Dorsolateral prefrontal cortex (tissue), 120 donors: ENCODE measurements at regions of chr10 and their contacts with region 1.

Region 1: DNA sequence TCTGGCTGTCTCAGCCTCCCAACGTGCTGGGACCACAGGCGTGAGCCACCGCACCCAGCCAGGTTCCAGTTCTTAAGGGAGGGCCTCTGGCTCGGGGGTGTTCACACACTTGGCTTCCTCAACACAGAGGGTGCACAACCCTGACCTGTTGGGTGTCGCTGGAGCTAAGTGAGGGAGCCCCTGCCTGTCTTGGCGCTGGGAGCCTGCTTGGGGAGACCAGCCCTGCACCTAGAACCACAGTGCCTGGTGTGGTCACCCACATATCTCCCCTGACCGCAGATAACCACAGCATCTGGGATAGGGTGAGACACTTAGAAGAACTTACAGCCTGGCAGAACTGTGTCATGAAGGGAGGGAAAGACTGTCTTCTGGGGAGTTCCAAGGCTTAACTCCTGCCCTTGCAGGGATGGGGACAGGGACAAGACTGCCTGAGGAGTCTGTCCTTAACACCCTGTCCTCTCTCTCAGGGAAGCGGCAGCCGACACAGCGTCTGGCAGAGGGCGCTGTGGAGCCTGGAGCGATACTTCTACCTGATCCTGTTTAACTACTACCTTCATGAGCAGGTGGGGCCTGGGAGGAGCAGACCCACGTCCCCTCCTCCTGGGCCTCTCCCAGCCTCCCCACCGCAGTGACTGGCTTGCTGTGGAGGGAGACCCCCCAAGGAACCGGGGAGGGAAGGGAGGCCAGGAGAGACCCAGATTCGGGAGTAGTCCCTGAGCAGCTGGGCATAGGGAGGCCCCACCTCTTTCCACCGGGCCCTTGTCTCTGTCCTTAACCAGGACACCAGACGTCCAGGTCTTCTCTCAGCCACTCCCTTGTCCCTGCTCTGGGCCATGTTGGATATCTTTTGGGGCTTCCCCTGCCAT is 59.0 kb downstream of the PALD1 start:
- DNase-seq: no peak
- H3K4me3 ChIP-seq: no peak overlapping the region
- H3K27ac ChIP-seq: peak overlapping the region in 6 of 59 donors; percentile 9 to 55 (median 21)
- H3K27me3 ChIP-seq: no peaks in the 10 kb centered on the region
- CTCF ChIP-seq: peak in 24 of 56 donors; percentile 6 to 38 (median 18)

Region 2: DNA sequence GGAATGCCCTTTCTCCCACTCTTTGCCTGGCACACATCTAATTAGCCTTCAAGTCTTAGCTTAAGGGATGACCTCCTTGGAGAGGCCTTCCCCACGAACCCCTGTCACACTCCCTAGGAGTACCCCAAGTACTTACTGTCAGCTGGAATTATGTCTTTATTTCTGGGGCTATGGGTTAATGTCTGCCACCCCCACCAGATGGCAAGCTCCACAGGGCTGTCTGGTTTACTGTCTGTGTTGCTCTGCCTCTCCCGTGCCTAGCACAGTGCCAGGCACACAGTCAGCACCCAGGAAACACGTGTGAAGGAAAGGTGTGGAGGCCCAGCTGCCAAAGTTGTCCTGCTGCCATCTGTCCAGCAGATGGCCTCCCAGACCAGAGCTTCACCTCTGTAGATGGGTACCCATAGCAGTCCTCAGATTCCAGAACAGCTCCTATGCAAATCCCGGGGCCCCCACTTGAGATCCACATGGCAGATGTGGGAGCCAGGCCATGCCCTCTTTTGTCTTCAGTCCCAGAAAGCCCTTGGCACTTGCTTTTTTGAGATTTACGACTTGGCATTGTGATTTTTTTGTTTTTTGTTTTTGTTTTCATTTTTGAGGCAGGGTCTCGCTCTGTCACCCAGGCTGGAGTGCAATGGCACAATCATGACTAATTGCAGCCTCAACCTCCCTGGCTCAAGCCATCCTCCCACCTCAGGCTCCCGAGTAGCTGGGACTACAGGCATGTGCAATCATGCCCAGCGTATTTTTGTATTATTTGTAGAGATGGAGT is 76.2 kb before region 1 on chr10:
- intact Hi-C with region 1: loop called (anchors 2 to 5 kb)
- DNase-seq: peak in 7 of 10 donors; percentile 48 to 69 (median 60)
- H3K4me3 ChIP-seq: no peak overlapping the region
- H3K27ac ChIP-seq: peak overlapping the region in 19 of 59 donors; percentile 2 to 63 (median 28)
- H3K27me3 ChIP-seq: no peaks in the 10 kb centered on the region
- CTCF ChIP-seq: peak; percentile 52 to 89 (median 80)

Region 3: DNA sequence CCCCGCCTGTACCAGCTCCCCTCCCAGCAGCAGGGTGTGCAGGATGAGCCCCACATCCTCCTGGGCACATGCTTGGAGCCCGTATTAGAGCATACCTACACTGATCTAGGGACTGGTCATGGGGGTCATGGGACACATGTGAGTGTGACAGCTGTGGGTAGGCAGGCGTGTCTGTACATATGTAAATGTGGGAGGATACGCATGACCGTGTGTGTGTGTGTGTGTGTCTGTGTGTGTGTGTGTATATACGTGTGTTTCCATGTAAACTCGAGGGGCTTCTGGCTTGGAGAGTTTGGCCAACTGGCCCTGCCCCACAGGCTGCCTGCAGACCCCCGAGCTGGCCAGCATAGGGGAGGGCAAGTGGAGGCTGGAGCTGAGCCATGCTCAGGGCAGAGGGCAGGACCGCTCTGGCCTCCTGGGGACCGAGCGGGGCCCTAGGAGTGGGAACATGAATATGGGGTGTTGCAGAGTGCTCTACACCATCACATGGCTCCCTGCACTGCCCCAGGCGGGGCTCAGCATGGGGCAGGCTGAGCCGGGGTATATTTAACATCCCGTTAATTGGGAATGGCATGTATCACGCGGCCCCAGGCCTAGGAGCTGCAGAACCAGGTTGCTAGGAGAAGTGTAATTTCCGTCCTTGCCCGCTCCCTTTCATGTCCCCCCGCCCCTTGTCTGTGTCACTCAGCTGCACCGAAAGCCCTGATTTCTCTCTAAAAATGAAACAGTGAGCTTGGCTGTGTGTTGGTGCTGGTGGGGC is 503.4 kb after region 1 on chr10:
- intact Hi-C with region 1: no loop called
- DNase-seq: no peak
- H3K4me3 ChIP-seq: no peak overlapping the region
- H3K27ac ChIP-seq: no peak overlapping the region
- H3K27me3 ChIP-seq: peaks cover 0 to 4% (median 0%) of the 10 kb centered on the region in 45 donors
- CTCF ChIP-seq: no peak